Adrenal gland (tissue), 19 donors: ENCODE measurements at regions of chr17 and their contacts with region 1.

Region 1: DNA sequence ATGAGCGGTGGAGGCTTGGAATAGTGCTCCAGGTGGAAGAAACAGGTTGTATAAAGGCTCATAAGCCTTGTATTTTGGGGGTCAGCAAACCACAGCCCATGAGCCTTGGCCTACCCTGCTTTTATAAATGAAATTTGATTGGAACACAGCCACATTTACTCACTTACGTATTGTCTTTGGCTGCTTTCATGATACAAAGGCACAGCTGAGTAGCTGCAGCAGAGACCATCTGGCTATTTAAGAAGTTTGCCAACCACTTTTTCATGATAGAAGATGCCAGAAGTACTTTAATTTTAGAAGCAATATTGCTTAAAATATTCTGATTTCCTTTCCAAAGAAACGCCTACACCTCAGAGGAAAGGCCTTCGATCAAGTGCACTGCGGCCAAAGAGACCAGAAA is 73.8 kb downstream of the C17orf58 start:
- DNase-seq: no peak
- H3K4me3 ChIP-seq: no peak overlapping the region
- H3K27ac ChIP-seq: no peak overlapping the region
- H3K4me1 ChIP-seq: no peaks in the 10 kb centered on the region
- H3K27me3 ChIP-seq: no peaks in the 10 kb centered on the region
- CTCF ChIP-seq: no peak
- POLR2A ChIP-seq: no peak

Region 2: DNA sequence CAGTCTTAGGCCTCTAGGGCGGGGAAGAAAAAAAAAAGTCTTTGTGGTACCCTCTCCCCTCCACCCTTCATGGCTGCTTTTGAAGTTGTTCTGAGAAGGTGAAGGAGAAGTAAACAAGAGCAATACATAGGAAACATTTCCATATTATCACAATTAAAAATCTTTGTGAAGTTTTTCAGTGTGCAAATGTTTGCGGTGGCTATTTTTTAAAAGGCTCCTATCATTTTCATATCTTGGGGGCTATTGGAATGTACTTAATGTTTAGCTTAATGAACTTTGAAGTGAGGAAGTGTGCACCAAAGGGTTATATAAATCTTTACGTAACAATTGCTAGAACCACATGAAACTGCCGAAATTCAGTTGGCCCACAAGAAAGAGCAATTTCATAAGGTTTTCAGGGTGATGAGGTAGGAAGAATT is 197.1 kb before region 1 on chr17:
- intact Hi-C with region 1: loop called in 1 of 2 experiments (anchors 10 kb)
- DNase-seq: no peak
- H3K4me3 ChIP-seq: no peak overlapping the region
- H3K27ac ChIP-seq: no peak overlapping the region
- H3K4me1 ChIP-seq: no peaks in the 10 kb centered on the region
- H3K27me3 ChIP-seq: no peaks in the 10 kb centered on the region
- CTCF ChIP-seq: no peak
- POLR2A ChIP-seq: no peak